K562 (cell line): ENCODE measurements at regions of chr20 and their contacts with region 1.

Region 1: DNA sequence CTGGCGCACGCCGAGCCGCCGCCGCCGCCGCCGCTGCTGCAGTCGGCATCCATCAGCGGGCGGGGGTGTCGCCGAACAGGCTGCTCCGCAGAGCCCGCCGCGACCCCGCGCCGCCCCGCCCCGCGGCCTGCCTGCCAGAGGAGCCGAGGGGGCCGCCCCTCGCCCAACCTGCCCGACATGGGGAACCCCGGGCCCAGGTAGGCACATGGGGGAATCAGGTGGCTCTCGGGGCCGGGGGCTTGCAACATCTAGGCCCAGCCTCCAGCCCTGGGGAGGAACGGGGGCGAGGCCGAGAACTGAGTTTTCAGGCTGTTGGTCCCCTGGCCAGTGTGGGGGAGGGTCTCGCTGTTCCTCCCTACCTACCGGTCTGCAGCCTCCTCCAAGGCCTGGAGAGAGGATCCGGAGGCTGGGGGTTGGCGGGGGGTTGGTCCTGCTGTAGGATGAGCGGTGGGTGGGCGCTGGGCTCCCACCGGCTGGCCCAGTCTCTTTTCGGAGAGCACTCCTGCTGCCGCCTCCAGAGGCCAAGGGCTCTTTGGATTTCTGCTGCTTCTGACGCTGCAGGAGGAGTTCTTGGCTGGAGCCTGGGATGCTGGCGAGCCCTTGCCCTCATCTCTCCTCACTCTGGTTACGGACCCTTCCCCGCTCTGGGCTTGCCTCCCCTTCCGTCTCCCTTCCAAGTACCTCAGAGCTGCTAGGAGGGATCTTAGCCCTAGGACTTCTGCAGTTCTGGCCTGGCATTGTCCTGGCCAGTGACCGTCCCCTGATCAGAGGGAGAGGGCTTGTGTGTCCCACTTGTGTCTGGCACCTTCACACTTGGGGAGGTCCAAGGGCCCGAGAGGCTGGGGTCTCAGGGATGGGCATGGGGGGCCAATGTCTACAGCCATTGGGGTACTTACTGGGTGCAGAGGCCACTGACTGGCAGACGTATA is at the start of gene EPB41L1:
- DNase-seq: no peak
- ATAC-seq: no peak
- H3K4me3 ChIP-seq: no peak within 1 kb of the TSS; the same call in 1 of the 2 replicates
- H3K27ac ChIP-seq: no peak within 1 kb of the TSS
- H3K4me1 ChIP-seq: peaks cover 0 to 13% of the 10 kb centered on the region in 2 experiments; a peak in 3 of 5 replicates
- H3K27me3 ChIP-seq: peaks cover 17 to 60% of the 10 kb centered on the region in 2 experiments; a peak in 4 of 5 replicates
- CTCF ChIP-seq: no peak
- EP300 ChIP-seq: no peak
- POLR2A ChIP-seq: no peak
- RAD21 ChIP-seq: no peak
- polyA plus RNA-seq, gene EPB41L1: 0.11 to 0.31 TPM

Region 2: GRCh38 chr20:36199345-36200257 is 44.6 kb after region 1 on chr20:
- CTCF ChIA-PET with region 1: interaction called, 27 read pairs
- POLR2A ChIA-PET with region 1: no interaction called
- in situ Hi-C with region 1: loop called (anchors 5 kb)
- intact Hi-C with region 1: loop called (anchors 1 kb)
- DNase-seq: peak; percentile 82 to 83 (median 83)
- ATAC-seq: peak; percentile 93
- H3K4me3 ChIP-seq: no peak overlapping the region
- H3K27ac ChIP-seq: no peak overlapping the region
- H3K4me1 ChIP-seq: no peaks in the 10 kb centered on the region
- H3K27me3 ChIP-seq: peaks cover 13 to 44% of the 10 kb centered on the region in 2 experiments; a peak in 3 of 5 replicates
- CTCF ChIP-seq: peak; percentile 89 to 95 (median 95)
- EP300 ChIP-seq: no peak
- POLR2A ChIP-seq: no peak
- RAD21 ChIP-seq: peak; percentile 79 to 96

Region 3: DNA sequence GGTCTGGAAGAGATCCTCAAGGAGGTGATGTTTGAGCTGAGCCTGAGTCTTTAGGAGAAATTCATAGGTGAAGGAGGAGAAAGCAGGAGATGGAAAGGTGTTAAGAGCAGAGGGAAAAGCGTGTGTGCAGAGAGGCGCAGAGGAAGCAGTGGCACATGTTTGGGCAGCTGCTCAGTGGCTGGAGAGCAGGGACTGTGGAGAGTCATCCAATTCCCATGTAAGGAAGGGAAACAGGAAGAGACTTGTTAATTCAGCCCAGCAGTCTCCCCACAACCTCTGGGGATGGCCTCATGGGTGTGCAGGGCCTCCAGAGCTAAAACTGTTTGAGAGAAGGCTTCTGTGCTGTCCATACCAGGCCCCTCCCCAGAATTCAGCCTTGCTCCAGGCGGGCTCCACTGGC is 97.5 kb after region 1 on chr20:
- CTCF ChIA-PET with region 1: no interaction called
- POLR2A ChIA-PET with region 1: no interaction called
- in situ Hi-C with region 1: no loop called
- intact Hi-C with region 1: no loop called
- DNase-seq: no peak
- ATAC-seq: no peak
- H3K4me3 ChIP-seq: no peak overlapping the region
- H3K27ac ChIP-seq: no peak overlapping the region
- H3K4me1 ChIP-seq: no peaks in the 10 kb centered on the region
- H3K27me3 ChIP-seq: no peaks in the 10 kb centered on the region
- CTCF ChIP-seq: no peak
- EP300 ChIP-seq: no peak
- POLR2A ChIP-seq: no peak
- RAD21 ChIP-seq: no peak